ENCODE measurements at regions of chr12 and their contacts with region 1.

Region 1: DNA sequence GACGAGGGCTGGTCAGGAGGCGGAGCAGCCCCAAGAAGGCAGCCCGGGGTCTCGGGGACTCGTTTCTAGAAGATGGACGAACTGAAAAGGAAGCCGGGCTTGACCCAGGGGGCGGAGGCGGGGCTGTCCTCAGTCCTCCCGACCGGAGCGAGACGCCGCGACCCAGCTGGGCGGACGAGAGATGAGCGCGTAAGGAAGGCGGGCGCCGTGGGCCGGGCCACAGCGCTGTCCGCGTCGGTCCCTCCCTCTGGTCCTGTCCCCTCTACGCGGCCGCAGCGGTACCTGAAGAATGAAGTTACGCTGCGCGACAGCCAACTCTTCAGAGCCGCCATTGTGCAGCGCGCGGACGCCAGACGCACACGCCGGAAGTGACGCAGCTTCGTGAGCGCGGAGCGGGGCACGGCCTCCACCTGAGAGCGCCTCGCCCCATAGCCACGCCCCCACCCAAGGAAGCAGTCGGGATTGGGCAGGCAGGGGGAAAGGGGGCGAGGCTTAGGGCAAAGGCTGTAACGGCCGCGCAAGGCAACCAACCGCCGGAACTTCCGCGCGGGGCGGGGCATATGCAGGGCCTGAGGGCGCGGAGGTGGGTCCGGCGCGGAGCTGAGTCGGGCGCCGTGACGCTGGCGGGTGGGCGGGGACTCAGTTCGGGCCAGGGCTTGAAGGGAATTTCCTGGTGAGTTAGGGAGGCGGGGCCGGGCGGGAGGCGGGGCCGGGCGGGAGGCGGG is at the start of gene DIABLO:
- DNase-seq: peak; percentile 100
- ATAC-seq: peak; percentile 91
- H3K4me3 Mint-ChIP-seq: peak within 1 kb of the TSS; percentile 85
- H3K27ac Mint-ChIP-seq: peak within 1 kb of the TSS; percentile 91
- H3K4me1 Mint-ChIP-seq: peaks cover 45% of the 10 kb centered on the region
- H3K27me3 Mint-ChIP-seq: no peaks in the 10 kb centered on the region
- total RNA-seq, gene DIABLO: 40.3 to 46.1 TPM

Region 2: GRCh38 chr12:122244565-122245371 is 18.9 kb after region 1 on chr12:
- CTCF ChIA-PET with region 1: interaction called, 33 read pairs
- DNase-seq: peak; percentile 63
- ATAC-seq: peak; percentile 83
- H3K4me3 Mint-ChIP-seq: peak overlapping the region; percentile 84
- H3K27ac Mint-ChIP-seq: peak overlapping the region; percentile 97
- H3K4me1 Mint-ChIP-seq: peaks cover 37% of the 10 kb centered on the region
- H3K27me3 Mint-ChIP-seq: no peaks in the 10 kb centered on the region

Region 3: DNA sequence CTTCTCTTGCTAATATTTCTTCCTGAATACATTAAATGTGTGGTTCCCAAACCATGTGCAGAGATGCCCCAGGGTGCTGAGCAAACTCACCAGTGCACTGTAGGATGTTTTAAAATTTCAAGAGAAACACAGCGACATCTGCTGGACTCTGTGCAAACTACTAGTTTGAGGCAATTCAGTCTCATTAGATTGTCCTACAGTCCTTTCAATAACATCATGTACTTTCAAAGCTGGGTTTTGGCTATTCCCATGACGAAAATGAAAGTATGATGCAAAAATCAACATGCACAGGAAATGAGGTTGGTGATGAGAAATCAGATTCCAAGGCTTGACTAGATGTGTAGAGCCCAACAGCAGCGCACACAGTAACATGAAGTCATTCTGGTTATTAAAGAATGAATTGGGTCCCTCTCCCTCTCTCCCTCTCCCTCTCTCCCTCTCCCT is 130.4 kb after region 1 on chr12:
- CTCF ChIA-PET with region 1: interaction called, 10 read pairs
- DNase-seq: peak; percentile 74
- ATAC-seq: peak; percentile 87
- H3K4me3 Mint-ChIP-seq: no peak overlapping the region
- H3K27ac Mint-ChIP-seq: peak overlapping the region; percentile 36
- H3K4me1 Mint-ChIP-seq: peaks cover 18% of the 10 kb centered on the region
- H3K27me3 Mint-ChIP-seq: no peaks in the 10 kb centered on the region